Activated naive CD8-positive, alpha-beta T cell treated with anti-CD3 and anti-CD28 coated beads, Interleukin-2, amount 10 ng/mL, durations not matched to agents 7 days and 5 days (primary cell): ENCODE measurements at regions of chr16 and their contacts with region 1.

Region 1: GRCh38 chr16:27235055-27235937 is 32.0 kb downstream of the KDM8 start:
- DNase-seq: peak; percentile 84
- ATAC-seq: peak; percentile 61
- H3K4me3 Mint-ChIP-seq: peak overlapping the region; percentile 76
- H3K27ac Mint-ChIP-seq: peak overlapping the region; percentile 100
- H3K4me1 Mint-ChIP-seq: peaks cover 84% of the 10 kb centered on the region
- H3K27me3 Mint-ChIP-seq: no peaks in the 10 kb centered on the region

Region 2: DNA sequence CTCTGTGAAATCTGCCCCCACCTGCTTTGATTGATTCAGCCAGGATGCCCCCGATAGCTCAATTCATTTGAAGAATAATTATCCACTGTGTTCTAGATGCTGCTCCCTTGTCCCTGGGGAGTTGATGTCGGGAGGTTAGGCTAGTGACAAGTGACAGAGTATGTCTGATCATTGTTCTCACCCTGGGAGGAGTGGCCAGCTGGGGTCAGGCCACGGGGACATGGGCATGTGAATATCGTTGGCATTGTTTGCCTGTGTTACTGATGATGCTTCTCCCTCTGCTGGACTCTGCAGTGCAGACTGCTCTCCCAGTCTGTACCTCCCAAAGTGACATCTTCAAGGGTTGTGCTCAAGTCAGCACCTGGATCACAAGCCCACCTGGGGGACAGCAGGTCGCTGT is 258.4 kb before region 1 on chr16:
- POLR2A ChIA-PET with region 1: no interaction called
- DNase-seq: no peak
- ATAC-seq: no peak
- H3K4me3 Mint-ChIP-seq: no peak overlapping the region
- H3K27ac Mint-ChIP-seq: no peak overlapping the region
- H3K4me1 Mint-ChIP-seq: no peaks in the 10 kb centered on the region
- H3K27me3 Mint-ChIP-seq: no peaks in the 10 kb centered on the region

Region 3: GRCh38 chr16:27179500-27180072 is 55.7 kb before region 1 on chr16:
- POLR2A ChIA-PET with region 1: interaction called, 32 read pairs
- DNase-seq: peak; percentile 90
- ATAC-seq: peak; percentile 95
- H3K4me3 Mint-ChIP-seq: no peak overlapping the region
- H3K27ac Mint-ChIP-seq: peak overlapping the region; percentile 50
- H3K4me1 Mint-ChIP-seq: peaks cover 31% of the 10 kb centered on the region
- H3K27me3 Mint-ChIP-seq: peaks cover 4% of the 10 kb centered on the region

Region 4: DNA sequence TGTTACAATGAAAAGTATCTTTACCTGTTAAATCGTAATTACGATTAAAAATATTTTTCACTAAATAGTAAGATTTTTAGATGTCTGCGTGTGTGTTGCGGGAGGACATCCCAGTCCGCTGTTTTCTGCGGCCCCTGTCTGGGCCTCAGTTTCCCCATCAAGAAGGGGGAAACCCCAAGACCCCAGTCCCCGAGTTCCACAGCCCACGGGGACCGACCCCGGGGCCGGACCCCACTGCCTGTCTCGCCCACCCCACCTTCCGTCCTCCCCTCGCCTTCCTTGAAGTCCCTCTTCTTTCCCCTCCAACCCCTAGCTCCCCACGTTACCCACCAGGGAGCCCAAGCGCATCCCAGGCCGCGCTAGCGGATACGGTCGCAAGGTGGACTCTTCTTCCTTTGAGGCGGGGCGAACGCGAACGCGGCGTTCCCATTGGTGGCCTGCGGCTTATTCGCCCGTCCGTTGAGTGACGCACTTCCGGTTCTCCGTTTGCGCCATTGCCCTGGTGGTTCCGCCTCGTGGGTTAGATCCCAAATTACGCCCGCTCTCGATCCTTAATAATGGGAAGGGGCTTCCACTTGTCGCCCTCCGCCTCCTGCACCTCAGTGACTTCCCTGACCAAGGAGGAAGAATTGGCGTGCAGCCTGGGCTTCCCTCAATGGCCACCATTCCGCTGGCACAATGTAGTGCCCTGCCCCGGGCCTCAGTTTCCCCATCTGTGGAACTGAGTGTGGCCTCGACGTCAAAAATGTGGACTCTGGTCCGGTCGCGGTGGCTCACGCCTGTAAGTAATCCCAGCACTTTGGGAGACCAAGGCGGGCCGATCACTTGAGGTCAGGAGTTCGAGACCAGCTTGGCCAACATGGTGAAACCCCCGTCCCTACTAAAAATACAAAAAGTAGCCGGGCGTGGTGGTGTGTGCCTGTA is 33.3 kb after region 1 on chr16 and contains the start of gene NSMCE1:
- POLR2A ChIA-PET with region 1: interaction called, 61 read pairs
- DNase-seq: peak; percentile 97
- ATAC-seq: peak; percentile 97
- H3K4me3 Mint-ChIP-seq: peak within 1 kb of the TSS; percentile 99
- H3K27ac Mint-ChIP-seq: peak within 1 kb of the TSS; percentile 98
- H3K4me1 Mint-ChIP-seq: peaks cover 56% of the 10 kb centered on the region
- H3K27me3 Mint-ChIP-seq: no peaks in the 10 kb centered on the region
- total RNA-seq, gene NSMCE1: 69.0 to 75.6 TPM

Region 5: GRCh38 chr16:27313422-27314160 is 78.3 kb after region 1 on chr16 and contains the start of gene IL4R:
- POLR2A ChIA-PET with region 1: interaction called, 275 read pairs
- DNase-seq: peak; percentile 84
- ATAC-seq: peak; percentile 30
- H3K4me3 Mint-ChIP-seq: peak within 1 kb of the TSS; percentile 93
- H3K27ac Mint-ChIP-seq: peak within 1 kb of the TSS; percentile 99
- H3K4me1 Mint-ChIP-seq: peaks cover 32% of the 10 kb centered on the region
- H3K27me3 Mint-ChIP-seq: peaks cover 5% of the 10 kb centered on the region
- total RNA-seq, gene IL4R: 215 TPM

Region 6: DNA sequence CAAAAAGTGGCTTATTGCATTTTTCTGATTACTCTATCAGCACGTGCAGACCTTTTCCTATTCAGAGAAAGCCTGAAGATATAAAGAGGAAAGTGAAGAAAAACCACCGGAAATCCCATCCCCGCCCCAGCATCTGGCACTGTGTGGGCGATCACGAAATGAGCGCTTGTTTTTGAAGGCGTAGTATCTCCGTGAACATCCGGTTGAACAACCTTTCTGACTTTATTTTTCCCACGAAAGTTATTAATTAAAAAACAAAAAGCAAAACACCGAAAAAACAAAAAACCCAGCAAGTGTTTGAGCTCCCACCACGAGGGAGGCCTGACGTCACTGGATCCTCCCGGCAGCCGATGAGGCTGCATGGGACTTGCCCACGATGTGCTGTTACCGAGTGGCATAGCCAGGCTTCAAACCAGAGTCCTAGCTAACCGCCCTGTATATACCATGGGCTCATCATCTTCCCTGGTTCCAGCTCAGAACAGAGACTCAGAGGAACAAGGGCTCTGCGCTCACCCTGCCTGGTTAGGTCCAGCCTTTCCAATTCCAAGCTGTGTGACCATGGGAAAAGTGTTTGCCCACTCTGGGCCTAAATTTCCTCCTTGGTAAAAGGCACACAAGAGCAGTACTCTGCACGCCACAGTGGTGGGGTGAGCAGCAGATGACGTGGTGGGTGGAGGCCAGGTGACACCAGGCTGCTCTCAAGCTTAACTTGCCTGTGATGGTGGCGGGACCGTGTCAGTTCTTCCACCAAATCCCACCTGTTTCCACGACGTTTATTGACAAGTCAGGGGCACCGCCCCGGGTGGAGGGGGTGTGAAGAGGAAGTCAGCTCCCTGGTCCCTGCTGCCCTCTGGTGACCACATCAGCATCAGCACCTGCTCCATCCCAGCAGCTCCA is 132.4 kb after region 1 on chr16:
- POLR2A ChIA-PET with region 1: interaction called, 39 read pairs
- DNase-seq: peak; percentile 83
- ATAC-seq: peak; percentile 68
- H3K4me3 Mint-ChIP-seq: peak overlapping the region; percentile 72
- H3K27ac Mint-ChIP-seq: peak overlapping the region; percentile 97
- H3K4me1 Mint-ChIP-seq: peaks cover 47% of the 10 kb centered on the region
- H3K27me3 Mint-ChIP-seq: no peaks in the 10 kb centered on the region